ENCODE measurements at regions of chr2 and their contacts with region 1.

Region 1: DNA sequence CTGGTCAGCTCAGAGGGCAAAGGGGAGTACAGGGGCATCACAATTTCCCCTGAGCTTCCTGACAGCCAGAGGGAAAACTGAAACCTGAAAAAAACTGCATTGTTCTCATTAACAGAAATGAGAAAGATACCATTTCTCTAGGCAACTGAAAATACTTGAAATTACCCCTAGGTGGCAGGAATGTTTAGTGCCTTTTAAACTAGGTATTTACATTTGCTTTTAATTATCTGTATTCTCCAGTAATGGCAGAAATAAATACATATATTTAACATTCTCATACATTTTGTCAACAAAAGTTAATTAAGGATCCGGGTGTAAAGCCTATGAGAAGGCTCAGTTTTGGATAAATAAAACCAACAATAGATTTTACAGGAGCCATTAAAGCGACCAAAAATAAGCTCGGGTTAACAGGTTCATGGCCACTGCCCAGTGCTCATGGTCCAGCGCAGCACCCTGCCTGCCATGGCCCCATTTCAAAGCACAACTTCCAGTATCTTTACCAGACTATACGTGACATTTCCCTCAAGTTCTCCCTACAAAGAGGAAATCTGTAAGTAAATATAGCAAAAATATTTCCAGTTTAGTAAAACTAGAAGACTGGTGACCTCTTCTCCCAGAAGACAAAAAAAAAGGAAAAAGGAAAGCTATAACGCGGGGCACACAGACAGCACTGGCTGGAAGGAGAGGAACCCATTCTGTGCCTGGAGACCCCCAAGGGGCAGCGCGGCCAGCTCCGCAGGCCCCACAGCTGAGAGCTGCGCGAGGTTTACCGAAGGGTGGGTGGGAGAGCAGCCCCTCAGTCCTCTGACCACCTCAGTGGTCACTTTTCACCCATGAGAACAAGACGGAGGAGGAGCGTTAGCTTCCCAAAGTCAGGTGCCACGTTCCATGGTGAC is 34.7 kb downstream of the RPL31 start:
- DNase-seq: peak; percentile 62
- H3K4me3 ChIP-seq: no peak overlapping the region
- H3K27ac ChIP-seq: no peak overlapping the region
- H3K4me1 ChIP-seq: peaks cover 0 to 18% of the 10 kb centered on the region in 2 experiments; a peak in 2 of 4 replicates
- H3K27me3 ChIP-seq: no peaks in the 10 kb centered on the region
- CTCF ChIP-seq: peak; percentile 69
- EP300 ChIP-seq: no peak
- RAD21 ChIP-seq: peak; percentile 79

Region 2: GRCh38 chr2:100786297-100786658 is 250.5 kb before region 1 on chr2:
- CTCF ChIA-PET with region 1: no interaction called
- POLR2A ChIA-PET with region 1: no interaction called
- DNase-seq: no peak
- H3K4me3 ChIP-seq: peak overlapping the region in 1 of 2 experiments; percentile 18; a peak in 1 of 4 replicates
- H3K27ac ChIP-seq: peak overlapping the region; percentile 81 to 84; a peak in 3 of 4 replicates
- H3K4me1 ChIP-seq: peaks cover 0 to 11% of the 10 kb centered on the region in 2 experiments; a peak in 3 of 4 replicates
- H3K27me3 ChIP-seq: no peaks in the 10 kb centered on the region
- CTCF ChIP-seq: no peak
- EP300 ChIP-seq: peak; percentile 7 to 87; a peak in 2 of 4 replicates
- RAD21 ChIP-seq: no peak

Region 3: GRCh38 chr2:100882645-100883613 is 153.9 kb before region 1 on chr2:
- CTCF ChIA-PET with region 1: no interaction called
- POLR2A ChIA-PET with region 1: no interaction called
- DNase-seq: no peak
- H3K4me3 ChIP-seq: no peak overlapping the region
- H3K27ac ChIP-seq: no peak overlapping the region
- H3K4me1 ChIP-seq: peaks cover 11 to 20% of the 10 kb centered on the region in 2 experiments; a peak in 1 of 4 replicates
- H3K27me3 ChIP-seq: no peaks in the 10 kb centered on the region
- CTCF ChIP-seq: no peak
- EP300 ChIP-seq: no peak
- RAD21 ChIP-seq: no peak

Region 4: GRCh38 chr2:101012706-101013181 is 24.1 kb before region 1 on chr2:
- CTCF ChIA-PET with region 1: interaction called, 13 read pairs
- POLR2A ChIA-PET with region 1: no interaction called
- DNase-seq: peak; percentile 45
- H3K4me3 ChIP-seq: no peak overlapping the region
- H3K27ac ChIP-seq: no peak overlapping the region
- H3K4me1 ChIP-seq: no peaks in the 10 kb centered on the region; a peak in 1 of 4 replicates
- H3K27me3 ChIP-seq: no peaks in the 10 kb centered on the region
- CTCF ChIP-seq: peak; percentile 90
- EP300 ChIP-seq: no peak
- RAD21 ChIP-seq: peak; percentile 85

Region 5: DNA sequence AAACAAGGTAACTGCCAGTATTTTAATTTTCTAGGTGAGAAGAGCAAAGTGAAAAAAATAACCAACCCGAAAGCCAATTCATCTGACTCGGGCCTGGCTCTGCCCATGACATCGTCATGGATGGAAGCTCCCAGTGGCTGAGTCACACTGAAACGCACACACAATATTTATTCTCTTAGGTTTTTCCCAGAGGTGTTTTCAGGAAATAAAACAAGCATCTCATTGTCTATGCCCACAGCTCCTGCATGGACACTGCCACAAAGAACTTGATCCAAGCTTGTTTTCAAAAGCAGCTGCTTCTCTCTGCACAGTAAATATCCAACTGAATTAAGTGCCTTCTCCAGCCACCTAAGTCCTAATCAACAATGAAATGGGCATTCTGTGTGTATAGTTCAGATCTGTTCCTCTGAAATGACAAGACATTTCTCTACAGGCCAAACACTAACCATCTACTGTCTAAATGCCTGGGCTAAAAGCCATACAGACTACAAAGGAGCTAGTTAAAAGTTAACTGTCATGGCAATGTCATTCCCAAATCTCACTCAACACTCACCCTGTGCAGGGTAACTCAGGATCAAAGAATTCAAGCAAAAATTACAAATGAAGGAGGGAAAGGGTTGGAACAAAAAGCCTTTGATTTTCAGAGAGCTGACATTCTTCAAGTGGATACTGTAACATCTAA is 28.2 kb after region 1 on chr2:
- CTCF ChIA-PET with region 1: interaction called, 10 read pairs
- POLR2A ChIA-PET with region 1: no interaction called
- DNase-seq: no peak
- H3K4me3 ChIP-seq: no peak overlapping the region
- H3K27ac ChIP-seq: peak overlapping the region in 1 of 2 experiments; percentile 8; a peak in 1 of 4 replicates
- H3K4me1 ChIP-seq: 0 out of 4 replicates have a peak, but pooled peaks cover 0 to 6% of the 10 kb centered on the region in 2 experiments
- H3K27me3 ChIP-seq: no peaks in the 10 kb centered on the region
- CTCF ChIP-seq: no peak
- EP300 ChIP-seq: no peak
- RAD21 ChIP-seq: no peak

Region 6: GRCh38 chr2:101188683-101189405 is 152.0 kb after region 1 on chr2:
- CTCF ChIA-PET with region 1: interaction called, 40 read pairs
- POLR2A ChIA-PET with region 1: no interaction called
- DNase-seq: peak; percentile 74
- H3K4me3 ChIP-seq: no peak overlapping the region
- H3K27ac ChIP-seq: no peak overlapping the region
- H3K4me1 ChIP-seq: peaks cover 0 to 2% of the 10 kb centered on the region in 2 experiments; a peak in 1 of 4 replicates
- H3K27me3 ChIP-seq: no peaks in the 10 kb centered on the region
- CTCF ChIP-seq: peak; percentile 70
- EP300 ChIP-seq: no peak
- RAD21 ChIP-seq: peak; percentile 67

Region 7: DNA sequence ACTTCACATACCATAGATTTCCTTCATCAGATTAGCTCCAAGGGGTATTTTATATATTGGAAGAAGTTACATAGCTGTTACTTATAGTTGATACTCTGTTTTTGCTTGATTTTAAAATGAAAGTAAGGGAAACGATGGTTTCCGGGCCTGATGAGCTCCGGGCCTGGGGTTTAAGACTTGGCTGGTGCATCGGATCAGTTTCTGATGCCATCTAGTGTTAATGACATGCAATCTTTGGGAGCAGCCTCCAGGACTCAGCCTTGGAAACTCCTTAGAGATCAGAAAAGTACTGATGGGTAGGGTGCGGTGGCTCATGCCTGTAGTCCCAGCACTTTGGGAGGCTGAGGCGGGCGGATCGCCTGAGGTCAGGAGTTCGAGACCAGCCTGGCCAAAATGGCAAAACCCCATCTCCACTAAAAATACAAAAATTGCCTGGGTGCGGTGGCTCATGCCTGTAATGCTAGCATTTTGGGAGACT is 168.8 kb after region 1 on chr2:
- CTCF ChIA-PET with region 1: interaction called, 80 read pairs
- POLR2A ChIA-PET with region 1: interaction called, 5 read pairs
- DNase-seq: peak; percentile 76
- H3K4me3 ChIP-seq: peak overlapping the region; percentile 17 to 53; a peak in 2 of 4 replicates
- H3K27ac ChIP-seq: peak overlapping the region; percentile 29 to 48; a peak in 3 of 4 replicates
- H3K4me1 ChIP-seq: no peaks in the 10 kb centered on the region
- H3K27me3 ChIP-seq: no peaks in the 10 kb centered on the region
- CTCF ChIP-seq: peak; percentile 72
- EP300 ChIP-seq: no peak
- RAD21 ChIP-seq: peak; percentile 79

Measured in SK-N-SH (cell line).